Body of pancreas (tissue), 4 donors: ENCODE measurements at regions of chr15 and their contacts with region 1.

Region 1: GRCh38 chr15:73081321-73081958 is 29.2 kb downstream of the NEO1 start:
- DNase-seq: peak; percentile 17 to 49 (median 22)
- ATAC-seq: peak; percentile 57
- H3K4me3 ChIP-seq: no peak overlapping the region
- H3K27ac ChIP-seq: no peak overlapping the region
- H3K4me1 ChIP-seq: peaks cover 18% of the 10 kb centered on the region
- H3K27me3 ChIP-seq: no peaks in the 10 kb centered on the region
- CTCF ChIP-seq: peak; percentile 54 to 82 (median 67)
- POLR2A ChIP-seq: no peak

Region 2: GRCh38 chr15:72796515-72797337 is 284.7 kb before region 1 on chr15:
- intact Hi-C with region 1: loop called (anchors 10 kb)
- DNase-seq: peak; percentile 31 to 72 (median 46)
- ATAC-seq: peak; percentile 76
- H3K4me3 ChIP-seq: peak overlapping the region in 1 of 2 donors; percentile 13
- H3K27ac ChIP-seq: no peak overlapping the region
- H3K4me1 ChIP-seq: peaks cover 11% of the 10 kb centered on the region
- H3K27me3 ChIP-seq: no peaks in the 10 kb centered on the region
- CTCF ChIP-seq: peak in 5 of 7 experiments; percentile 13 to 71 (median 58)
- POLR2A ChIP-seq: no peak

Region 3: DNA sequence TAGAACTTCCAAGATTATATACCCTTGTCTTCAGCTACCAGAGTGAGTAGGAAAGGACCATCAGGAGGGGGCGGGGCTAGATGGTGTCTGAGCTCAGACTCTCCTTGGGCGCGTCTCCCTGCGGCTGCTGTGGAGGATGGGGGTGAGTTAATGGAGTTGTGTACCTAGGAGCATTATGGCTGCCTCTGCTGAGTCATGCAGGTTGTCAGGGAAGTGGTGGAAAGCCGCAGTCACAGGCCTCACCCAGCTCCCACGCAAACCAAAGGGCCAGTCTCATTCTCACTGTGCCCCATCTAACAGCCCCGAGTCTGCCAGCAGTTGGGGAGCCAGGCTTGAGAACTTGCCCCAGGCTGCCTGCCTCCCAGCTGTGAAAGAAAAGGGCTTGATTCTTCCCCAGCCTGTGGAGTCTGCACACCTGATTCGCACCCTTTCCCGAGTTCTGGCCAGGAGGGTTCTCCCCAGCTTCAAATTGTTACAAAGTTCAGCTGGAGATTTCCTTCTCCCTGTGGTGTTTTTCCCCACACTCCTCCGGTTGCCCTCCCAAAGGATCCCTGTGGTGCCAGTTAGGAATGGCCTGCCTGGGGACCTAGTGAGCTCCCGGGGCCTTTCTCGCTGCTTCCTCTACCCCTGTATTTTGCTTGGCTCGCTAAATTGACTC is 144.0 kb after region 1 on chr15:
- intact Hi-C with region 1: no loop called
- DNase-seq: no peak
- ATAC-seq: no peak
- H3K4me3 ChIP-seq: no peak overlapping the region
- H3K27ac ChIP-seq: no peak overlapping the region
- H3K4me1 ChIP-seq: no peaks in the 10 kb centered on the region
- H3K27me3 ChIP-seq: no peaks in the 10 kb centered on the region
- CTCF ChIP-seq: no peak
- POLR2A ChIP-seq: no peak